ENCODE measurements at regions of chr1 and their contacts with region 1.

Region 1: DNA sequence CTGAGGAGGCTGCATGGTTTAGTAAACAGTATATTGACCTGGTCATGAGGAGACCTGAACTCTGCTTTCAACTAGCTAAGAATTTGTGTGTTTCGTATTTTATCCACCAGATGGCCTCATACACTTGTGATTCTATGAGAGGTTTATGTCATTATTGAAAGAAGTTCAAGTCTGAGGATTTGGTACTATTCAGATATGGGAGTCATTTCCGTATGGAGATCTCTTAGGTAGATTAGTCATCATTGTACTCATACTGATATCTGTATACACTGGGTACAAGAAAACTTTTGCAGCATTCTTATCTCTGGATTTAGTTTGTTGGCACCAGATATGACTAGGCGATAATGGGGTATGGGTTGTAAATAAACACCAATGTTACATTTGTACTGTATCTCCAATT is 26.6 kb downstream of the ATF6 start:
- DNase-seq: no peak
- H3K4me3 Mint-ChIP-seq: no peak overlapping the region
- H3K27ac Mint-ChIP-seq: peak overlapping the region; percentile 52
- H3K4me1 Mint-ChIP-seq: peaks cover 22% of the 10 kb centered on the region
- H3K27me3 Mint-ChIP-seq: no peaks in the 10 kb centered on the region

Region 2: GRCh38 chr1:161848676-161849075 is 55.9 kb after region 1 on chr1:
- CTCF ChIA-PET with region 1: no interaction called
- POLR2A ChIA-PET with region 1: no interaction called
- intact Hi-C with region 1: loop called (anchors 2 kb)
- DNase-seq: no peak
- H3K4me3 Mint-ChIP-seq: no peak overlapping the region
- H3K27ac Mint-ChIP-seq: no peak overlapping the region
- H3K4me1 Mint-ChIP-seq: peaks cover 19% of the 10 kb centered on the region
- H3K27me3 Mint-ChIP-seq: no peaks in the 10 kb centered on the region

Region 3: DNA sequence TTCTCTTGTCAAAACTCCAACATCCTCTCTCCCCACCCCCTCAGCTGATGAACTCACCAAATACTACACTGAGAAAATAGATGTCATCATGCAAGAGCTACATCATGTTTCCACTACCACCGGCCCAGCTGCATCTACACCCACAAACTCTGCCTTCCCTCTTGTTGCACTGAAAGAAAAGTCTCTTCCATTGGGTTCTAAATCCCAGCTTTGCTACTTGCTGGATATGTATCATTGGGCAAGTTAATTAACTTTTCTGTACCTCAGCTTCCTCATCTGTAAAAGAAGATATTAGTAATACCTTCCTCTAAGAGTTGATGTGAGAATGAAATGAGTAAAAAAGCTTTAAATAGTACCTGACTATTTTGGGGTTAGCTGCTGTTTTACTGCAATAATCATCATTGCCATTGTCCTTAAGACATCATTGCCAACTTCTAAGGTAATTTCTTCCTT is 122.3 kb after region 1 on chr1:
- CTCF ChIA-PET with region 1: interaction called, 9 read pairs
- POLR2A ChIA-PET with region 1: interaction called, 4 read pairs
- intact Hi-C with region 1: loop called (anchors 2 kb)
- DNase-seq: peak; percentile 60
- H3K4me3 Mint-ChIP-seq: no peak overlapping the region
- H3K27ac Mint-ChIP-seq: no peak overlapping the region
- H3K4me1 Mint-ChIP-seq: peaks cover 22% of the 10 kb centered on the region
- H3K27me3 Mint-ChIP-seq: no peaks in the 10 kb centered on the region

Region 4: GRCh38 chr1:161962091-161962887 is 169.5 kb after region 1 on chr1:
- CTCF ChIA-PET with region 1: interaction called, 7 read pairs
- POLR2A ChIA-PET with region 1: no interaction called
- intact Hi-C with region 1: loop called (anchors 1 kb)
- DNase-seq: peak; percentile 67
- H3K4me3 Mint-ChIP-seq: peak overlapping the region; percentile 73
- H3K27ac Mint-ChIP-seq: peak overlapping the region; percentile 90
- H3K4me1 Mint-ChIP-seq: peaks cover 52% of the 10 kb centered on the region
- H3K27me3 Mint-ChIP-seq: no peaks in the 10 kb centered on the region

Region 5: GRCh38 chr1:162035241-162035640 is 242.5 kb after region 1 on chr1:
- CTCF ChIA-PET with region 1: interaction called, 144 read pairs
- POLR2A ChIA-PET with region 1: interaction called, 6 read pairs
- intact Hi-C with region 1: loop called (anchors 1 kb)
- DNase-seq: peak; percentile 29
- H3K4me3 Mint-ChIP-seq: no peak overlapping the region
- H3K27ac Mint-ChIP-seq: no peak overlapping the region
- H3K4me1 Mint-ChIP-seq: peaks cover 4% of the 10 kb centered on the region
- H3K27me3 Mint-ChIP-seq: peaks cover 12% of the 10 kb centered on the region